B cell (primary cell): ENCODE measurements at regions of chr12 and their contacts with region 1.

Region 1: DNA sequence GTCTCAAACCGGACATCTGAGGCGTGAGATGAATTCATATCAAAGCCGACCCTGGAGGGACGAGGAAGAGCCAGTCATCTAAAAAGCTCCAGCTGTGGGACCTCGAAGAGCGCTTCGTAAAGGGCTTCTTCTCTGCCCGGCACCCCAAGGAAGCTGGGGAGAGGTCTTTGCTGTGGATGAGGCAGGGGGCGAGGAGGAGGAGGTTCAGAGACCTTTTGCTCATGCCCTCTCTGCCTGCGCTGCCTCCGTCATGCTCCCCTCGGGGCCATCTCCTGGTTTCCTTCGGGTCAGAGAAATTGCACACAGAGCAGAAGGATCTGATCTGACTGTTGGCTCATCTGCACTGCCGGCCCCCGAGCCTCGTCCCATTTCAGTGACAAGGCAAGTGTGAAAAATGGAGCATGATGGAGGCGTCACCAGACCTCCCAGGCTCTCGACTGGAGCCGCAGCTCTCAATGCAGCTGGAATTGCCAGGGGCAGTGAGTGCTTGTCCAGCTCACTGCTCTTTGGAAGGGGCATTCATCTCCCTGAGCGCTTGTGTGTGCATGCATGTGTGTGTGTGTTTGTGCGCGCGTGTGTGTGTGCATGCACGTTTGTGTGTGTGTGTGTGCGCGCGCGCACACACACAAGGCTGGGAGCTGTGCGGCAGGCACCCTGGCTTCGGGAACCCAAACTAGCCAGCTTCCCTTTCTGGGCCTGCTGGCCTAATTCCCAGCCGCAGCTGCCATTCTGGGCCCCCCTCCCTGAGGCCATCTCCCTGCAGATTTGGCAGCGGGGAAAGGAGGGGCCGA is 9.2 kb downstream of the CABP1 start:
- DNase-seq: no peak
- ATAC-seq: no peak
- H3K4me3 ChIP-seq: peak overlapping the region in 1 of 5 experiments; percentile 37
- H3K4me3 Mint-ChIP-seq: peak overlapping the region; percentile 76
- H3K27ac ChIP-seq: no peak overlapping the region
- H3K27ac Mint-ChIP-seq: no peak overlapping the region
- H3K4me1 ChIP-seq: peaks cover 16 to 23% of the 10 kb centered on the region in 2 donors
- H3K4me1 Mint-ChIP-seq: peaks cover 22% of the 10 kb centered on the region
- H3K27me3 ChIP-seq: peaks cover 0 to 52% (median 18%) of the 10 kb centered on the region in 4 experiments
- H3K27me3 Mint-ChIP-seq: peaks cover 51% of the 10 kb centered on the region
- CTCF ChIP-seq: peak; percentile 52

Region 2: GRCh38 chr12:120356567-120357030 is 293.0 kb before region 1 on chr12:
- CTCF ChIA-PET with region 1: no interaction called
- POLR2A ChIA-PET with region 1: no interaction called
- intact Hi-C with region 1: loop called (anchors 5 kb)
- DNase-seq: peak; percentile 78
- ATAC-seq: peak; percentile 73
- H3K4me3 ChIP-seq: no peak overlapping the region
- H3K4me3 Mint-ChIP-seq: no peak overlapping the region
- H3K27ac ChIP-seq: no peak overlapping the region
- H3K27ac Mint-ChIP-seq: no peak overlapping the region
- H3K4me1 ChIP-seq: peaks cover 0 to 6% of the 10 kb centered on the region in 2 donors
- H3K4me1 Mint-ChIP-seq: peaks cover under 1% of the 10 kb centered on the region
- H3K27me3 ChIP-seq: peaks cover 0 to 20% (median 8%) of the 10 kb centered on the region in 4 experiments
- H3K27me3 Mint-ChIP-seq: peaks cover 52% of the 10 kb centered on the region
- CTCF ChIP-seq: peak; percentile 84

Region 3: GRCh38 chr12:120514002-120514401 is 135.6 kb before region 1 on chr12:
- CTCF ChIA-PET with region 1: no interaction called
- POLR2A ChIA-PET with region 1: no interaction called
- intact Hi-C with region 1: no loop called
- DNase-seq: no peak
- ATAC-seq: no peak
- H3K4me3 ChIP-seq: no peak overlapping the region
- H3K4me3 Mint-ChIP-seq: no peak overlapping the region
- H3K27ac ChIP-seq: no peak overlapping the region
- H3K27ac Mint-ChIP-seq: no peak overlapping the region
- H3K4me1 ChIP-seq: no peaks in the 10 kb centered on the region
- H3K4me1 Mint-ChIP-seq: no peaks in the 10 kb centered on the region
- H3K27me3 ChIP-seq: no peaks in the 10 kb centered on the region
- H3K27me3 Mint-ChIP-seq: no peaks in the 10 kb centered on the region
- CTCF ChIP-seq: no peak

Region 4: GRCh38 chr12:120669055-120669840 is 19.6 kb after region 1 on chr12:
- CTCF ChIA-PET with region 1: interaction called, 204 read pairs
- POLR2A ChIA-PET with region 1: interaction called, 7 read pairs
- intact Hi-C with region 1: loop called (anchors 2 kb)
- DNase-seq: peak; percentile 79
- ATAC-seq: peak; percentile 74
- H3K4me3 ChIP-seq: peak overlapping the region in 2 of 5 experiments; percentile 5 to 33
- H3K4me3 Mint-ChIP-seq: peak overlapping the region; percentile 77
- H3K27ac ChIP-seq: peak overlapping the region in 1 of 2 donors; percentile 23
- H3K27ac Mint-ChIP-seq: peak overlapping the region; percentile 86
- H3K4me1 ChIP-seq: peaks cover 58 to 66% of the 10 kb centered on the region in 2 donors
- H3K4me1 Mint-ChIP-seq: peaks cover 67% of the 10 kb centered on the region
- H3K27me3 ChIP-seq: peaks cover 0 to 4% (median 2%) of the 10 kb centered on the region in 4 experiments
- H3K27me3 Mint-ChIP-seq: peaks cover 8% of the 10 kb centered on the region
- CTCF ChIP-seq: no peak

Region 5: DNA sequence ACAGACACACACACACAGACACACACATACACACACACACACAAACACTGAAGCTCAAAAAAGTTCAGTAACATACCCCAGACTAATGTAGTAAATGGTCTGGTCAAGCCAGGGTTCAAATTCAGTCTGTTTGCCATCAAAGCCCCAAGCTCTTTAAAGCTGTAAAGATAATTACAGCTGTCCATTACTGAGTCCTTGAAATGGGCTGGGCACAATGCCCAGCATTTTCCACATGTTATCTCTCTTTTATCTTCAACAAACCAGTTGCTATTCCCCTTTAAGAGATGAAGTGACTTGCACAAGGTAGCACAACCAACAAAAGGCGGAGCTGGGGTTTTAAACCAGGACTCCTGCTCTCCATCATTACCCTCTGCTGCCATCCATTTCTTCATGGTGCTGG is 53.0 kb after region 1 on chr12:
- CTCF ChIA-PET with region 1: interaction called, 172 read pairs
- POLR2A ChIA-PET with region 1: no interaction called
- intact Hi-C with region 1: no loop called
- DNase-seq: no peak
- ATAC-seq: no peak
- H3K4me3 ChIP-seq: no peak overlapping the region
- H3K4me3 Mint-ChIP-seq: no peak overlapping the region
- H3K27ac ChIP-seq: no peak overlapping the region
- H3K27ac Mint-ChIP-seq: no peak overlapping the region
- H3K4me1 ChIP-seq: peaks cover 3 to 7% of the 10 kb centered on the region in 2 donors
- H3K4me1 Mint-ChIP-seq: peaks cover 8% of the 10 kb centered on the region
- H3K27me3 ChIP-seq: no peaks in the 10 kb centered on the region
- H3K27me3 Mint-ChIP-seq: no peaks in the 10 kb centered on the region
- CTCF ChIP-seq: no peak

Region 6: GRCh38 chr12:120725659-120726509 is 76.2 kb after region 1 on chr12 and contains the start of gene ACADS:
- CTCF ChIA-PET with region 1: interaction called, 10 read pairs
- POLR2A ChIA-PET with region 1: no interaction called
- intact Hi-C with region 1: loop called (anchors 1 kb)
- DNase-seq: peak; percentile 91
- ATAC-seq: peak; percentile 100
- H3K4me3 ChIP-seq: peak within 1 kb of the TSS; percentile 44 to 73 (median 63)
- H3K4me3 Mint-ChIP-seq: peak within 1 kb of the TSS; percentile 90
- H3K27ac ChIP-seq: peak within 1 kb of the TSS in 1 of 2 donors; percentile 61
- H3K27ac Mint-ChIP-seq: peak within 1 kb of the TSS; percentile 46
- H3K4me1 ChIP-seq: peaks cover 28 to 30% of the 10 kb centered on the region in 2 donors
- H3K4me1 Mint-ChIP-seq: peaks cover 34% of the 10 kb centered on the region
- H3K27me3 ChIP-seq: no peaks in the 10 kb centered on the region
- H3K27me3 Mint-ChIP-seq: no peaks in the 10 kb centered on the region
- CTCF ChIP-seq: no peak
- total RNA-seq, gene ACADS: 10.0 and 10.1 TPM in 2 replicates

Region 7: DNA sequence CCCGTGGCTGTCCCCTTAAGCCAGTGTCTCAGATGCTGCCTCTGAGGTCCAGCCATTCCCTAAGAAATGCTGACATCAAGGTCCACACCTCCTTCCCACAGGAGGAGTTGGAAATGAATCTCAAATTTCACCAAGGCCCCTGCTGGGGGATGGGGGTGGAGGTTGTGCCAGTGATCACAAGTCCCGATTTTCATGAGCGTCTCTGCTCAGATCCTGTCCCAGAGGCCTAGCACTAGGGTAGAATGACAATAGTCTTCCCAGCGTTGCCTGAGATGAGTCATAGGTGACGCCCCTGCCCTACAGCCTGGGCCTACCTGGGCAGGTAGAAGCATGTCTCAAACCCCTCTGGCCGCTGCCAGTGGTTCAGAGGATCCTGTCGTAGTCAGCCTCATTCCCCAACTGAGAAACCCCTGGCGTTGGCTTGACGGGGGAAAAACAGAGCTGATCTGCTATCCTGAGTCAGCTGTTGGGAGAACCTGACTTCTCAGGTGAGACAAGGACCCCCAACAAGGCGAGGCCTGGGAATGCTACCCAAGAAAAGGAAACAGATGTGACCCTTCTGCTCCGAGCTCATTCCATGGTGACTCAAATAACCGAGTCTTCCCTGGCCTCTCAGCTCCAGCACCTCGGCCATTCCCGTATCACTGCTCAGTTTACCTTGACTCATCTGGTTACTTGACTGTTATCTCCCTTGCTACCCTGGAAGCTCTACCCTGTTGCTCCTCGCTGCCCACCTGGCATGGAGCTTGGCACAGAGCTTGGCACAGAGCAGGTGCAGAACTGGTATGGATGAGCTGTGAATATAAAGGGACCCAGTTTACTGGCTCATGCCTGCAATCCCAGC is 276.3 kb after region 1 on chr12:
- CTCF ChIA-PET with region 1: no interaction called
- POLR2A ChIA-PET with region 1: no interaction called
- intact Hi-C with region 1: no loop called
- DNase-seq: no peak
- ATAC-seq: no peak
- H3K4me3 ChIP-seq: no peak overlapping the region
- H3K4me3 Mint-ChIP-seq: no peak overlapping the region
- H3K27ac ChIP-seq: no peak overlapping the region
- H3K27ac Mint-ChIP-seq: no peak overlapping the region
- H3K4me1 ChIP-seq: no peaks in the 10 kb centered on the region
- H3K4me1 Mint-ChIP-seq: no peaks in the 10 kb centered on the region
- H3K27me3 ChIP-seq: no peaks in the 10 kb centered on the region
- H3K27me3 Mint-ChIP-seq: no peaks in the 10 kb centered on the region
- CTCF ChIP-seq: no peak

Region 8: DNA sequence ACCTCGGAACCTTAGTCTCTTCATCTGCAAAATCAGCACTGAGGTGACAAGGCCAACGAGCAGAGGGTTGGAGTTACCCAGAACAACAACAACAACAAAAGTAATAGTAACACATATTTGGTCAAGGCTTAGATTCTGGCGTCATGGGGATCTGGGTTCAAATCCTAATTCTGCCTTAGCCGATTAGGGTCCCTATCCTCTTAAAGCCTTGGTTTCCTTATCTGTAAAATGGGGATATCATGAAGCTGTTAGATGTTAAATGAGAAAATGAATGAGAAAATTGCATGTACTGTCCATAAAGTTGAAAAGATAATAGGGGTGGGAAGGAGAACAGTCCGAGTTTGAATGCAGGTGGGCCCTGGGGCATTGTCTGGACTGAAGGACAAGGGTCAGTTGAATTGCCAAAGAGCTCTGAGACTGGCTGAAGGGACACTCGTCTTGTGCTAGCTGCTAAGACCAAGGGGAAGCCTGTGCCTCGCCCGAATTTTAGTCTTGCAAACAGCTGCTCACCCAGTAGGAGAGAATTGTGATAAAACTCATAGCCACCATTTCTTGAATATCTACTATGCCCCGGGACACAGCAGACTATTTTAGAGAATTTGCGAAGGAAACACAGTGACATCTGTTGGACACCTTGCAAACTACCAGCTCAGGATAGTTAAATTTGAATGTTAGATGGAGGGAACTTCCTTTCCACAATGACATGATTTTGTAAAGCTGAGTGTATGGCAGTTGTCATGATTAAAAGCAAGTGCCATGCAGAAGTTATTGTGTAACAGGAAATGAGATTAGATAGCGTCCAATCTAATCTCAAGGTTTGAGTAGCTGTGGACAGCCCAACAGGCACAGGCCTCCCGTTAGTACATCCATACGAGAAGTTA is 321.9 kb after region 1 on chr12:
- CTCF ChIA-PET with region 1: interaction called, 88 read pairs
- POLR2A ChIA-PET with region 1: no interaction called
- intact Hi-C with region 1: loop called (anchors 1 kb)
- DNase-seq: peak; percentile 78
- ATAC-seq: peak; percentile 88
- H3K4me3 ChIP-seq: no peak overlapping the region
- H3K4me3 Mint-ChIP-seq: no peak overlapping the region
- H3K27ac ChIP-seq: no peak overlapping the region
- H3K27ac Mint-ChIP-seq: peak overlapping the region; percentile 42
- H3K4me1 ChIP-seq: peaks cover 3 to 6% of the 10 kb centered on the region in 2 donors
- H3K4me1 Mint-ChIP-seq: peaks cover 6% of the 10 kb centered on the region
- H3K27me3 ChIP-seq: peaks cover 0 to 2% (median 0%) of the 10 kb centered on the region in 4 experiments
- H3K27me3 Mint-ChIP-seq: peaks cover 4% of the 10 kb centered on the region
- CTCF ChIP-seq: peak; percentile 80

Region 9: DNA sequence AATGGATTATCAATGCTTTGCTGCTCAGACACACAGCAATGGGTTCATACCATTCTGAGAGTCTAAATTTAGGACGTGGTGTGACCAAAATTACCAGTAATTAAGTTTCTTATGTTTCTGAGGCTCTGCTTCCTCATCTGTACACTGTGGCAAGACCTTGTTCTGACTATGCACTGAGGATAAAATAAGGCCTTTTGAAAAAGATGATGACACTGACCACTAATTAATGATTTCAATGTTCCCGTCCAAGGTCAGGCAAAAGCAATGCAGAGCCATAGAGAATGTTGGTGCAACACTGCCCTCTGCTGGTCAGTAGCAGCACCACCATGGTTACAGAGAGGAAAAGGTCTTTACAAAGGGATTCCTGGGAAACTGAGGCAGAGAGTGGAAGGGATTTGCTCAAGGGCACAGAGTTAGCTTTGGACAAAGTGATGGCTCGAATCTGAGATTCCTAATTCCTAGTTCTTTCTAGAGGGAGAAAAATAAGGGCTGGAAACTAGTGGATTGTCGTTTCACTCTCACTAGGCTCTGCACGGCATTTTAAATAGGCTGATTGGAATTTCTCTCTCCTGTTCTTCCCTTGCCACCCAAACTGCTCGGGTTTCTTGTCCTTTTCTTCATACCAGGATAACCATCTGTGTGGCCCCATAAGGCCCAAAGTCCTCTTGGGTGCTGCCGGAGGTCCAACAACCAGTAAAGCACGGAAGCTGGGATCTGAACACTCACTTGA is 460.7 kb after region 1 on chr12:
- CTCF ChIA-PET with region 1: no interaction called
- POLR2A ChIA-PET with region 1: no interaction called
- intact Hi-C with region 1: loop called (anchors 5 kb)
- DNase-seq: peak; percentile 78
- ATAC-seq: peak; percentile 71
- H3K4me3 ChIP-seq: no peak overlapping the region
- H3K4me3 Mint-ChIP-seq: no peak overlapping the region
- H3K27ac ChIP-seq: no peak overlapping the region
- H3K27ac Mint-ChIP-seq: no peak overlapping the region
- H3K4me1 ChIP-seq: peaks cover 0 to 6% of the 10 kb centered on the region in 2 donors
- H3K4me1 Mint-ChIP-seq: peaks cover 4% of the 10 kb centered on the region
- H3K27me3 ChIP-seq: no peaks in the 10 kb centered on the region
- H3K27me3 Mint-ChIP-seq: no peaks in the 10 kb centered on the region
- CTCF ChIP-seq: peak; percentile 99